IMR-90 (cell line): ENCODE measurements at regions of chr12 and their contacts with region 1.

Region 1: DNA sequence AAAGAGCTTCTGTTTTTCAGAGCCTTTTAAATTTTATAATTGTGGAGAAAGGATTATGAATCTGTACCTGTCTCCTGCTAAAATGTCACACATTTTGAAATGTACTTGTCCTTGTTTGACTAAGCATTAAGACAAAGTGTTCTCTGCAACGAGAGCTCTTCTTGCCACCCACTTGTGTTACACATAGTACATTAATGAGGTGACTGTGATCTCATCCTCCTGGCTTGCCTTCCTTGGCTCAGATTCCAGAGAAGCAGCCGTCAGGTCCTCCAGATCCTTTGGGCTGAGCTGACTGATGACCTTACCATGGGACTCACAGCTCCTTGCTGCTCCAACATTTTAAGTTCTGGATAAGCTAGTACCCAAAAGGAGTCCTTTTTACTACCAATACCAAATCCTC is 81.4 kb downstream of the BBS10 start:
- DNase-seq: peak; percentile 90
- ATAC-seq: peak; percentile 87
- H3K4me3 ChIP-seq: no peak overlapping the region
- H3K27ac ChIP-seq: peak overlapping the region; percentile 12; the same call in 1 of the 2 replicates
- H3K4me1 ChIP-seq: peaks cover 11% of the 10 kb centered on the region
- H3K27me3 ChIP-seq: no peaks in the 10 kb centered on the region
- CTCF ChIP-seq: no peak
- POLR2A ChIP-seq: no peak
- RAD21 ChIP-seq: no peak

Region 2: DNA sequence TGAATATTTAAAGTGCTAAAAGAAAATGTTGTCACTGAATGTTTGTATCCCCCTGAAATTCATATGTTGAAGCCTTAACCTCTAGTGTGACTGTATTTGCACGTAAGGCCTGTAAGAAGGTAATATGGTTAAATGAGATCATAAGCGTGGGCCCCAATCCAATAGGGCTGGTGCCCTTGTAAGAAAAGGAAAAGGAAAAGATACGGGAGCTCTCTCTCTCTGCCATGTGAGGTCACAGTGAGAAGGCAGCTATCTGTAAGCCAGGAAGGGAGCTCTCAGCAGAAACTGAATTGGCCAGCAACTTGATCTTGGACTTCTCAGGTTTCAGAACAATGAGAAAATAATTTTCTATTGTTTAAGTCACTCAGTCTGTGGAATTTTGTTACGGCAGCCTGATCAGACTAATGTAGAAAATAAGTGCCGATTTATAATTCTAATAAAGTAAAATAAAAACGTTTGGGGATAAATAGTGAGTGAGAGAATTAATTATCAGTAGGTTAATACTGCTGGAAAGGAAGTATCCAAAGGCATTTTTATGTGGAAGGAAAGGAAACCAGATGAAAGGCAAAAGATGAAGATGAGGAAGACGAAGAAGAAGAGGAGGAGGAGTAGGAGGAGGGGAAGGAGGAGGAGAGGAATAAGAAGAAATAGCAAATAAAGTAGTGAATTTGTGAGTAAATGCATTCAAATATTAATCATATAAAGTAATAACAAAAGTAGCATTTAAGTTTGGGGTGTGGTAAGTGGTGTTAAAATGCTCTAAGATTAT is 566.9 kb before region 1 on chr12:
- CTCF ChIA-PET with region 1: no interaction called
- POLR2A ChIA-PET with region 1: no interaction called
- dilution Hi-C with region 1: no loop called
- in situ Hi-C with region 1: no loop called
- intact Hi-C with region 1: no loop called
- DNase-seq: peak; percentile 67
- ATAC-seq: 0 out of 2 replicates have a peak, but pooled peaks have one; percentile 32
- H3K4me3 ChIP-seq: no peak overlapping the region
- H3K27ac ChIP-seq: peak overlapping the region; percentile 2; the same call in 1 of the 2 replicates
- H3K4me1 ChIP-seq: no peaks in the 10 kb centered on the region
- H3K27me3 ChIP-seq: no peaks in the 10 kb centered on the region
- CTCF ChIP-seq: no peak
- POLR2A ChIP-seq: no peak
- RAD21 ChIP-seq: no peak

Region 3: DNA sequence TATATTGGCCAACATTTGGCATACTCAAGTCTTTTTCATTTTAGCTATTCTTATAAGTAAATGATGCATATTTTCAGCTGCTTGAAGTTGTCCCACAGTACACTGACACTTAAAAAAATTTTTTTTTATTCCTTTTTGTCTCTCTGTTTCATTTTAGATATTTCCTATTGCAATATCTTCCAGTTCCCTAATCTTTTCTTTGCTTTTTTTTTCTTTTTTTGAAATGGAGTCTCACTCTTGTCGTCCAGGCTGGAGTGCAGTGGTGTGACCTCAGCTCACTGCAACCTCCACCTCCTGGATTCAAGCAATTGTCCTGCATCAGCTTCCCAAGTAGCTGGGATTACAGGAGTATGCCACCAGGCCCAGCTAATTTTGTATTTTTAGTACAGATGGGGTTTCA is 538.0 kb before region 1 on chr12:
- CTCF ChIA-PET with region 1: no interaction called
- POLR2A ChIA-PET with region 1: interaction called, 13 read pairs
- dilution Hi-C with region 1: no loop called
- in situ Hi-C with region 1: no loop called
- intact Hi-C with region 1: no loop called
- DNase-seq: no peak
- ATAC-seq: no peak
- H3K4me3 ChIP-seq: no peak overlapping the region
- H3K27ac ChIP-seq: no peak overlapping the region
- H3K4me1 ChIP-seq: peaks cover 12% of the 10 kb centered on the region
- H3K27me3 ChIP-seq: no peaks in the 10 kb centered on the region
- CTCF ChIP-seq: no peak
- POLR2A ChIP-seq: no peak
- RAD21 ChIP-seq: no peak

Region 4: DNA sequence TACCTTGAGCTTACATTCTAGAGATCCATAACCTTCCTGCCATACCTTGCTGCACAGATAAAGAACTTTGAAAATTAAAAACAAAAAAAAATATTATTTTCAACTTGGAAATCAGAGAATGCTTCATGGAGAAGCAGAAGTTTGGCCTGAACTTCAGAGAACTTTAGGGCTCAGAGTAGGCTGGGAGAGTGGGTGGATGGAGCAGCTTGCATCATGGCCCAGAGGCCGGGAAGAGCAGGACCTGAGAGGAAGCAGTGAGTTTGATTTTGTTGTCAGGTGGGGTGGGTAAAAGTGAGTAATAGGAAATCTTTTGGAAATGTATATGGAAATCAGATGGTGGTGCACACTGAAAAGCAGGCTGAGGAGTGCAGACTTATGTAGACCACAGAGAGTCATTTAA is 526.9 kb before region 1 on chr12:
- CTCF ChIA-PET with region 1: no interaction called
- POLR2A ChIA-PET with region 1: no interaction called
- dilution Hi-C with region 1: no loop called
- in situ Hi-C with region 1: no loop called
- intact Hi-C with region 1: no loop called
- DNase-seq: no peak
- ATAC-seq: no peak
- H3K4me3 ChIP-seq: no peak overlapping the region
- H3K27ac ChIP-seq: no peak overlapping the region
- H3K4me1 ChIP-seq: peaks cover 8% of the 10 kb centered on the region
- H3K27me3 ChIP-seq: no peaks in the 10 kb centered on the region
- CTCF ChIP-seq: no peak
- POLR2A ChIP-seq: no peak
- RAD21 ChIP-seq: no peak